Ascending aorta (tissue), 2 donors: ENCODE measurements at regions of chr9 and their contacts with region 1.

Region 1: GRCh38 chr9:116737152-116737546 is 50.0 kb downstream of the TRIM32 start:
- DNase-seq: peak in 1 of 2 donors; percentile 77
- H3K4me3 ChIP-seq: no peak overlapping the region
- H3K27ac ChIP-seq: no peak overlapping the region
- H3K4me1 ChIP-seq: no peaks in the 10 kb centered on the region
- H3K27me3 ChIP-seq: no peaks in the 10 kb centered on the region
- CTCF ChIP-seq: peak; percentile 68 to 80 (median 74)

Region 2: GRCh38 chr9:116141864-116142561 is 595.1 kb before region 1 on chr9:
- intact Hi-C with region 1: no loop called
- DNase-seq: no peak
- H3K4me3 ChIP-seq: no peak overlapping the region
- H3K27ac ChIP-seq: no peak overlapping the region
- H3K4me1 ChIP-seq: no peaks in the 10 kb centered on the region
- H3K27me3 ChIP-seq: no peaks in the 10 kb centered on the region
- CTCF ChIP-seq: no peak

Region 3: DNA sequence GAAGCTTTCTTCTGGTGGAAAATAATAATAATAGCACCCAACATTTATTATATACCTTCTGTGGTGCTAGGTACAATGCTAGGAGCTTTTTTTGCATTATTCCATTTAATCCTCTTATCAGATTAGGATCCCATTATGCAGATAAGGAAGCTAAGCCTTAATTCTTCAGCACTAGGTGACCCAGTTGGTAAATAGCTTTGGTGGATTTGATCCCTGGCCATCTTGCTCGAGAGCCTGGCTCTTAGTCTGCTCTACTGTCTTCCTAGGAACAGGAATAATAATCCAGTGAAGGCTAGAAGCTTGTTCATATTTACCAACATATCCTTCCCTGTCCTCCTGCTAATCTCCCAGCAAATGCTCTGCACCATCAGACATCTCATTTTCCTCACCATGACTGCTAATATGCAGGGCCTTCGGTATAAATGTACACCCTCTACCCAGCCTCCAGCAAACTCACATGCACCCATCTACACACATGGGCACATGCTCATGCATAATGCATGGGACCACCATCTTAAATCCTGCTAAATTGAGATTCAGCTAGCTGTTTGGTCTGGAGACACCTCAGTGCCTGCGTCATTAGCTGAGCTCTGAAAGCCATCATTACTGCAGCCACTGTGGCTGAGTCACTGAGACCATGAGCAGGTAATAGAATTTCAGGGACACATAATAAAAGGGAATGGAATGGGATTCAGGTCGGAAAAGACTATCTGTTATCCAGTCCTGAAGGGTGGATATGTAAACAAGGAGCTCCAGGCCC is 37.5 kb after region 1 on chr9:
- intact Hi-C with region 1: no loop called
- DNase-seq: no peak
- H3K4me3 ChIP-seq: no peak overlapping the region
- H3K27ac ChIP-seq: no peak overlapping the region
- H3K4me1 ChIP-seq: no peaks in the 10 kb centered on the region
- H3K27me3 ChIP-seq: no peaks in the 10 kb centered on the region
- CTCF ChIP-seq: no peak

Region 4: GRCh38 chr9:116855883-116856662 is 118.9 kb after region 1 on chr9:
- intact Hi-C with region 1: loop called (anchors 10 kb)
- DNase-seq: no peak
- H3K4me3 ChIP-seq: no peak overlapping the region
- H3K27ac ChIP-seq: no peak overlapping the region
- H3K4me1 ChIP-seq: no peaks in the 10 kb centered on the region
- H3K27me3 ChIP-seq: no peaks in the 10 kb centered on the region
- CTCF ChIP-seq: no peak